PC-3 (cell line): ENCODE measurements at regions of chr13 and their contacts with region 1.

Region 1: GRCh38 chr13:34469201-34470144 is 472.6 kb upstream of the NBEA start:
- DNase-seq: peak; percentile 92
- ATAC-seq: peak; percentile 89
- H3K4me3 ChIP-seq: no peak overlapping the region
- H3K27ac ChIP-seq: peak overlapping the region; percentile 97
- H3K4me1 ChIP-seq: peaks cover 52% of the 10 kb centered on the region
- H3K27me3 ChIP-seq: no peaks in the 10 kb centered on the region
- CTCF ChIP-seq: no peak

Region 2: DNA sequence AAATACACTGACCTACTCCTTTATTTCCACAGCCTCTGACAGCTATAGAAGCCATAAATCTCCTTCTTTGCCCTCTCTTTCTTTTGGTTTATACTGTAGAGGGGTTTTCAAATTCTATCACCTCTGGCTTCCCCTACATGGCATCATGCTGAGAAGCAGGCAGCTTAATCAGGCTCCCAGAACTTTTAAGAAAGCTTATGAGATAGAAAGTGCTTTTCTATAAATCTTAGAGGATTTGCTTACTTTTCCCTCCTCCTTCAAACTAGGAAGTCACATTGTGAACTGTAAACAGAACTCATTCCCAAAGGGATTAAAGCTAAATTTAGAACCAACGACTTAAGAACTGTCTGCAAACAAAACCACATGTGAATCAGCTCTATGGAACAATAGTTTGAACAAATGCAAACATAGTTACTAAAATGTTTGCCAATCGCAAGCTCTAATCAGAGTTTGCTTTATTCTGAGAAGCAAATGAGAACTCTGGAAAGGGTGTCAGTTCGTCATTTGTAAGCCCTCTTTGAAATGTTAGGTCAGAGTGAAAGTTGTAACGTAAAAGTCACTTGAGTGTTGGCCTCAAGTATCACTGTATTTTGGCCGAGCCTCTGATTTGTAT is 307.4 kb before region 1 on chr13:
- CTCF ChIA-PET with region 1: no interaction called
- POLR2A ChIA-PET with region 1: interaction called, 3 read pairs
- intact Hi-C with region 1: loop called (anchors 5 kb)
- DNase-seq: peak; percentile 77
- ATAC-seq: peak; percentile 82
- H3K4me3 ChIP-seq: peak overlapping the region; percentile 38; the same call in 1 of the 2 replicates
- H3K27ac ChIP-seq: peak overlapping the region; percentile 95
- H3K4me1 ChIP-seq: peaks cover 33% of the 10 kb centered on the region
- H3K27me3 ChIP-seq: no peaks in the 10 kb centered on the region
- CTCF ChIP-seq: no peak

Region 3: DNA sequence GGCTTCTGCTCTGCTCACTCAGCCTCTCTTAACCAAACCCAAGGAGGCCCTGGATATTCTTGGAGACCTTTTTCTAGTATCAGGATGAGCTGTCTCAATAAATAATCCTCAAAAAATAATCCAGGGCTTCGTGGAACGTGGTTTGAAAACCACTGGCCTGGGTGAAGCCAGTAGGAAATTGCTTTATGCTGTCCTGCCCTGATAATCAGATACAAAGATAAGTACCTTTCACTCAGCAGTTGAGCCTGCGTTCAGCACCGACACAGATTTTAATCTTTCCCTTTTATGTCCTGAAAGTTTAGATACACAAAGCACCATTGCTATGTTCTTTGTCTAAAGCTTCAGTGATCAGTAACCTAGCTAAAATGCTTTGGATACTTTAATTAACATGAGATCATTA is 191.5 kb before region 1 on chr13:
- CTCF ChIA-PET with region 1: no interaction called
- POLR2A ChIA-PET with region 1: interaction called, 12 read pairs
- intact Hi-C with region 1: no loop called
- DNase-seq: no peak
- ATAC-seq: no peak
- H3K4me3 ChIP-seq: no peak overlapping the region
- H3K27ac ChIP-seq: no peak overlapping the region
- H3K4me1 ChIP-seq: no peaks in the 10 kb centered on the region
- H3K27me3 ChIP-seq: no peaks in the 10 kb centered on the region
- CTCF ChIP-seq: no peak

Region 4: GRCh38 chr13:34416833-34417425 is 52.5 kb before region 1 on chr13:
- CTCF ChIA-PET with region 1: no interaction called
- POLR2A ChIA-PET with region 1: no interaction called
- intact Hi-C with region 1: loop called (anchors 2 kb)
- DNase-seq: peak; percentile 67
- ATAC-seq: peak; percentile 56
- H3K4me3 ChIP-seq: no peak overlapping the region
- H3K27ac ChIP-seq: peak overlapping the region; percentile 79
- H3K4me1 ChIP-seq: peaks cover 36% of the 10 kb centered on the region
- H3K27me3 ChIP-seq: no peaks in the 10 kb centered on the region
- CTCF ChIP-seq: no peak

Region 5: GRCh38 chr13:34452816-34453215 is 16.7 kb before region 1 on chr13:
- CTCF ChIA-PET with region 1: no interaction called
- POLR2A ChIA-PET with region 1: no interaction called
- intact Hi-C with region 1: no loop called
- DNase-seq: no peak
- ATAC-seq: no peak
- H3K4me3 ChIP-seq: no peak overlapping the region
- H3K27ac ChIP-seq: no peak overlapping the region
- H3K4me1 ChIP-seq: no peaks in the 10 kb centered on the region
- H3K27me3 ChIP-seq: no peaks in the 10 kb centered on the region
- CTCF ChIP-seq: no peak

Region 6: DNA sequence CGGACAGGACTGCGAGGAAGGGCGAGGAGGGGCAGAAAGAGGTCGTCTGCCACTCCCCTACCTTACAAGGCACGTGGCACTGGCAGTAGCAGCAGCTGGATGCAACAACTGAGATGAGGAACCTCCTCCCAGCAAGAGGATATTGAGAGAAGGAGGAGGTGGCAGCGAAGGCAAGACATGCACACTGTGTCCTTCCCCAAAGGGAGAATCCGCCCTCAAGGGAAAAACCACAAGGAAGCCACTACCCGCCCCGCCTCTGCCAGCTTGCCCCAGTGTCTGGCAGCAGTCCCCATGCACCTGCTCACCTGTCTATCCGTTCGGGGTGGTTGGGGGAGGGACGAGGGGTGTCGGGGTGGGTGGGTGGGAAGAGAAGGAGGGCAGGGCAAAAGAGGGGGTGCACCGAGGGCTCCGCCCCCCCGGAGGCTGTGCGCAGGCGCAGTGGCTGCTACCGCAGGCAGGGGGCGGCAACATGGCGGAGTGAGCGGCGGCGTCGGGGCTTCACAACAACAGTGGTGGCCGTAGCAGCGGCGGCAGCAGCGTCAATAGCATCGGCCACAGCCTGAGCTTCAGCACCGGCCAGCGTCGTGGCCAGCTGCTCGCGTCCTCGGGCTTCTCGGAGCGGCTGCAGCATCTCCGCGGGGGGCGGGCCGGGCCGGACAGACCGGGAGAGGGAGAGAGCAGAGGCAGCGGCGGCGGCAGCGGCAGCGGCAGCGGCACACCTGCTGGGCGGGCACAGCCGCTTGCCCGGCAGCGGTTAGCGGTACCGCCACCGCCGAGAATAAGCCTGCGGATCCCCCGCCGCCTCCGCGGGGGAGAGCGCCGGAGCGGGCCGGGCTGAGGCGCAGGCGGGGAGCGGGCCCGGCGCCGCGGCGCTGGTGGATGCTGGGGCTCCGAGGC is 472.6 kb after region 1 on chr13 and contains the start of gene NBEA:
- CTCF ChIA-PET with region 1: no interaction called
- POLR2A ChIA-PET with region 1: no interaction called
- intact Hi-C with region 1: loop called (anchors 5 kb)
- DNase-seq: peak; percentile 74
- ATAC-seq: peak; percentile 68
- H3K4me3 ChIP-seq: peak within 1 kb of the TSS; percentile 92
- H3K27ac ChIP-seq: no peak within 1 kb of the TSS
- H3K4me1 ChIP-seq: peaks cover 24% of the 10 kb centered on the region
- H3K27me3 ChIP-seq: no peaks in the 10 kb centered on the region
- CTCF ChIP-seq: no peak
- total RNA-seq, gene NBEA: 4.4 and 6.2 TPM in 2 replicates